Sciatic nerve (tissue), 2 donors: ENCODE measurements at regions of chr7 and their contacts with region 1.

Region 1: GRCh38 chr7:57343901-57344622 is 105.9 kb upstream of the ZNF716 start:
- DNase-seq: no peak
- ATAC-seq: no peak

Region 2: DNA sequence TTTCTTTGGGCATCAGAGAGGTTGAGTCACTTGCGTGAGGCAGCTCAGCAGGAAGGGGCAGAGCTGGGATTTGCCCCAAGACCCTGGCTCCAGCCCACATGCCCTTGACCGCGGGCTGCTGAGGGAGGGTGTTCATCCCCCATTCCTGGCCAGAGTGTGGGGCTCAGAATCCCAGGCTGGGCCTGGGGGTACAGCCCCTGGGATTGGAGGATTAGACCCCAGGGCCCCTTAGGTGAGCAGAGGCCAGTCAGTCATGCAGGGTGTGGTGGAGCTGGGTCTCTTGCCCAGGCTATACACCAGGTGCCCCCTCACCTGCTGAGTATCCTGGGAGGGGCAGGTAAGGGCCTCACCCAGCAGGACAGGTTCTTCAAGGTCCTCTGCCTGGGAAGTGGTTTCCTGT is 37.5 kb after region 1 on chr7:
- intact Hi-C with region 1: loop called (anchors 1 kb)
- DNase-seq: no peak
- ATAC-seq: no peak

Region 3: DNA sequence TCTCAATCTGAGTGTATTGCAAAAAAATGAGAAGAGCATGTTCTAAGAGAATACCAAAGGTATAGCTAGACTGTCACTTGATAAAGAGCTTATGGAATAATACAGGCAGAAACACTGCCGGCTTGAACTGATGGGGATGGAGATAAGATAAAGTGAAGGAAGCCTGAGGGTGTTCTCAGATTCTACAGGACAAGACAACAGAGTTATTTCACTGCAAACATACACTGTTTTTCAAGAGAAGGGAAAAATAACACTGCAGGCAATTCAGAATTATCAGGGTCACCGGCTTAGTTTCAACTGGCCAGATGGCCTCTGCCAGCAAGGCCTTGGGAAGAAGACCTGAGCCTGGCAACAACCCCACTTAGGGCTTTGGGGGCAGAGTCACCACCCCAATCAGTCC is 185.9 kb after region 1 on chr7:
- intact Hi-C with region 1: no loop called
- DNase-seq: no peak
- ATAC-seq: no peak